A673 (cell line): ENCODE measurements at regions of chr22 and their contacts with region 1.

Region 1: DNA sequence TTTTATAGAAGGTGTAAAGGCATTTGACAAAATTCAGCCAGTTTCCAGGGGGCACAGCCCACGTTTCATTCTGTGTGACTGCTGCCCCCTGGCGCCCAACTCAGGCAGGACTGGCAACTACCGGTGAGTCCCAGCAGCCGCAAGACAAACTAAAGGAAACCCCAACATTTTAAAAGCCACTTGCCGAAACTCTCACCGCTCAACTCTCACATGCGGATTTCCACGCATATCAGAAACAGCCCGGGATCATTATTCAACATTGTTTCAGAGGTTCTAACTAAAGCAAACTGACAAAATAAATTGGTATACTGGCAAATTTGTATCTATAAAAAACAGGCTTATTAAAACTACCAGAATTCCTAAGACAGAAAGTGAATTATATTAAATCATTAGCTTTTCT is 48.2 kb downstream of the MORC2 start:
- DNase-seq: peak; percentile 81
- H3K4me3 ChIP-seq: no peak overlapping the region
- H3K27ac ChIP-seq: no peak overlapping the region
- H3K4me1 ChIP-seq: peaks cover 14% of the 10 kb centered on the region
- H3K27me3 ChIP-seq: no peaks in the 10 kb centered on the region
- CTCF ChIP-seq: peak; percentile 88

Region 2: DNA sequence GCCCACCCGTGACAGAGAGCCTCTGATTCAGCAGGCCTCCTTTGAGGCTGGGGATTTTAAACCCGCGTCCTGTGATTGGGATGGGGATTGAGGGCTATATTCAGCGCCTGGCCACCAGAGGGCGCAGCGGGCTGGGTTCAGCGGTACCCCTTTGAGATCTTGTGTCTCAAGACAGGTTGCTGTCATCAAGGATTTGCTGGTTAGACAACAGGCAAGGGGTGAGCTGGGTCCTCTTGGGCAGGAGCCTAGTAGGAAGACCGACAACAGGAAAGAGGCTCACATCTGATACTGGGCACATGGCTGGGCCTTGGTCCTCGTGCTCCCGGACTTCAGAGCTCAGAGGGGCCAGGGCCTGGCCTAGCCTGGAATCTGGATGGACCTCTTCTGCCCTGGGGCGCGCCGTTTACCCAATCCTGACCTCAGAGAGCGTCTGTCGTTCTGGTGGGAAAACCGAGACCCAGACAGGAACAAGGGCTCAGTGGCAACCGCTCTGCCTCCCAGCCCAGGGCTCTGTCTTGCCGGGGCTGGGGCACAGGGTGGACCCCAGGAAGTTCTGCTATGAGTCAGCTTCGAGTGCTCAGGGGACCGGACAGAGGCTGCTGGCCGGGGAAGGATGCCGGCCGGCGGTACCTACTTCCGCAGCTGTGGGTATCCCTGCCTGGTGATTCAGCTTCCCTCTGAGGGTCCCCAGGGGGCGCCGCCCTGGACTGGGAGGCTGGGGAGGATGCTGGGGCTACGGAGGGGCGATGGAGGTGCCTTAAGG is 285.8 kb before region 1 on chr22:
- CTCF ChIA-PET with region 1: no interaction called
- POLR2A ChIA-PET with region 1: no interaction called
- intact Hi-C with region 1: loop called (anchors 2 kb)
- DNase-seq: peak; percentile 89
- H3K4me3 ChIP-seq: peak overlapping the region; percentile 63
- H3K27ac ChIP-seq: no peak overlapping the region
- H3K4me1 ChIP-seq: peaks cover 16% of the 10 kb centered on the region
- H3K27me3 ChIP-seq: no peaks in the 10 kb centered on the region
- CTCF ChIP-seq: peak; percentile 97

Region 3: GRCh38 chr22:30763815-30764686 is 156.4 kb before region 1 on chr22:
- CTCF ChIA-PET with region 1: interaction called, 3 read pairs
- POLR2A ChIA-PET with region 1: no interaction called
- intact Hi-C with region 1: loop called (anchors 1 kb)
- DNase-seq: peak; percentile 75
- H3K4me3 ChIP-seq: no peak overlapping the region
- H3K27ac ChIP-seq: no peak overlapping the region
- H3K4me1 ChIP-seq: no peaks in the 10 kb centered on the region
- H3K27me3 ChIP-seq: no peaks in the 10 kb centered on the region
- CTCF ChIP-seq: peak; percentile 73